Mammary epithelial cell (primary cell): ENCODE measurements at regions of chr9 and their contacts with region 1.

Region 1: DNA sequence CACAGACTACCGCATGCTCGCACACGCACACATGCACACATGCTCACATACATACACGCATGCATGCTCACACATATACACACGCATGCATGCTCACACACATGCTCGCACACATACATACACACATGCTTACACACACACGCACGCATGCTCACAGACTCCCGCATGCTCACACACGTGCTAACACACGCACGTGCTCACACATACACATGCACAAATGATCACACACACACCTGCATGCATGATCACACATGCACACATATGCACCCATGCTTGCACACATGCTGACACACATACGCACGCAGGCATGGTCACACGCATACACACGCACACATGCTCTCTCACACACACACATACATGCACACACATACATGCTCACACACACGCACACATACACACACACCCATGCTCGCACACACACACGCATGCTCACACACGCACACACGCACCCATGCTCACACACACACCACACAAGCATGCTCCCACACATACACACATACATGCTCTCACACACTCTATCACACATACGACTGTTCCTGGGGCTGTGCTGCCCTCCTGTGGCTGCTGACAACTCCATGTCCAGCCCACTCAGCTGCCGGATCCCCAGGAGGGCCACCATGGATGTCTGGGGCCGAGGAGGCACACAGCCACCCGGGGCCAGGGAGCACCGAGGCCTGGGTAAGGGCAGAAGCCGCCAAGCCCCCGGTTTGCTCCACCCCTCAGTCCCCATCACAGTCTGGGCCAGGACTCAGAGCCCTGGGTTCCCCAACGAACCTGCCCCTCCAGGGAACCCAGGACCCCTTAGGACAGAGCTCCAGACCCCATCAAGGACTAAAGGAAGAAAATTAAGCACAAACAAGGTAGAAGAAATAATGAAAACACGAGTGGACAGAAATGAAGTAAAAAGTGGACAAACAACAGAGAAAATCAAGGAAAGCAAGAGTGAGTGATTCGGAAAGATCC is 31.4 kb upstream of the EGFL7 start:
- DNase-seq: peak; percentile 50
- H3K4me3 ChIP-seq: no peak overlapping the region
- H3K27ac ChIP-seq: no peak overlapping the region
- H3K4me1 ChIP-seq: peaks cover 8% of the 10 kb centered on the region
- H3K27me3 ChIP-seq: no peaks in the 10 kb centered on the region
- CTCF ChIP-seq: peak; percentile 69 to 87

Region 2: GRCh38 chr9:136312436-136312835 is 318.9 kb before region 1 on chr9:
- CTCF ChIA-PET with region 1: no interaction called
- dilution Hi-C with region 1: no loop called
- in situ Hi-C with region 1: no loop called
- intact Hi-C with region 1: loop called (anchors 10 kb)
- DNase-seq: no peak
- H3K4me3 ChIP-seq: no peak overlapping the region
- H3K27ac ChIP-seq: no peak overlapping the region
- H3K4me1 ChIP-seq: peaks cover 15% of the 10 kb centered on the region
- H3K27me3 ChIP-seq: no peaks in the 10 kb centered on the region
- CTCF ChIP-seq: peak; percentile 46 to 88

Region 3: DNA sequence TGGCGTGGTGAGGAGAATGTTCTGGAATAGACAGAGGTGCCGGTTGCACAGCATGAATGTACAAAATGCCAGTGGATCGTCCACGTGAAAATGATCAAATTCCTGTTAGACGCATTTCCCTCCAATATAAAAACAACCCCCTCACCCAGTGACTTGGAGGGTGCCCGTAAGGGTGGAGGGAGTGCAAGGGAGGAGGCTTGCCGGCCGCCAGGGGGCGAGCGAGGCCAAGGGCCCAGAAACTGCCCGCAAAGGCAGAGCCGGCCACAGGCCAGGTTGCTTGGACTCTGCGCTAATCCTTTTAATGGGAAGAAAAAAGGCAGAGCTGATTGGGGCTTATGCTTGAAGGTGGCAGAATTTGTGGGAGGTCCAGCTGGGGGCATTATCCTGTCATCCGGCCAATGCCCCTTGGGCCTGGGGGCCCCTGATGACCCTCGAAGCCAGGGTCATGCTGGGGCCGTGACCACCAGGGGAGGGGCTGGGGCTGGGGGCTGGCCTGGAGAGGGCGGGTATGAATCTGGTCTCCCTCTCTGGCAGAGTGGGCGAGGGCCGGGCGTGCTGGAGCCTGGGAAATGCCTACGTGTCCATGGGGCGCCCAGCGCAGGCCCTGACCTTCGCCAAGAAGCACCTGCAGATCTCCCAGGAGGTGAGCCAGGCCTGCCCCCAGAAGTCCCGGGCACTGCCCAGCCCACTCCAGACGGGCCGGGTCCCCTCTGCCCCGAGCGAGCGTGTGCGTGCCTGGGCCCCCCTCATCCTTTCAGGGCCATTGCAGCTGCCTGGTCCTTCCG is 292.0 kb before region 1 on chr9:
- CTCF ChIA-PET with region 1: no interaction called
- dilution Hi-C with region 1: no loop called
- in situ Hi-C with region 1: loop called in 1 of 2 experiments (anchors 25 kb)
- intact Hi-C with region 1: no loop called
- DNase-seq: peak; percentile 38
- H3K4me3 ChIP-seq: no peak overlapping the region
- H3K27ac ChIP-seq: no peak overlapping the region
- H3K4me1 ChIP-seq: peaks cover 14% of the 10 kb centered on the region
- H3K27me3 ChIP-seq: no peaks in the 10 kb centered on the region
- CTCF ChIP-seq: peak; percentile 93

Region 4: GRCh38 chr9:136345281-136346156 is 285.8 kb before region 1 on chr9:
- CTCF ChIA-PET with region 1: no interaction called
- dilution Hi-C with region 1: no loop called
- in situ Hi-C with region 1: loop called in 1 of 2 experiments (anchors 25 kb)
- intact Hi-C with region 1: loop called (anchors 1 kb)
- DNase-seq: peak; percentile 76
- H3K4me3 ChIP-seq: peak overlapping the region; percentile 54 to 61 (median 58)
- H3K27ac ChIP-seq: peak overlapping the region; percentile 34
- H3K4me1 ChIP-seq: peaks cover 51% of the 10 kb centered on the region
- H3K27me3 ChIP-seq: no peaks in the 10 kb centered on the region
- CTCF ChIP-seq: peak in 1 of 2 donors; percentile 43

Region 5: DNA sequence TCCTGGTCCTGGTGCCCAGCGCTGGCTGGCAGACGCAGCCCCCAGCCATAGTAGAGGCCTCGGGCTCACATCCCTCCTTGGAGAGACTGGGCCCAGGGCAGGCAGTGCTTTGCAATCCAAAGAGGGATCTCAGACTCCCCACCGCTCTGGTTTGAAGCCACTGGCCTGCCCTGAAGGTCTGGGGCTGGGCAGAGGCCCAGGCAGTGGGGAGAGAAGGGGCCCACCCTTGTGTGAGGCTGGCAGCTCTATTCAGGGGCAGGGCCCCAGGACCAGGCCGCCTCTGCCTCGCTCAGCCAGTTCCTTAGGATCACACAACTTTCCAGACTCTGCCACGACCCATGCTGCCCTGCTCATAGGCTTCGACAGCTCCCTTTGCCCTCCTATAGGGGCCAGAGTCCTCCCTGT is 137.8 kb before region 1 on chr9:
- CTCF ChIA-PET with region 1: no interaction called
- dilution Hi-C with region 1: no loop called
- in situ Hi-C with region 1: loop called in 1 of 2 experiments (anchors 5 kb)
- intact Hi-C with region 1: no loop called
- DNase-seq: no peak
- H3K4me3 ChIP-seq: no peak overlapping the region
- H3K27ac ChIP-seq: no peak overlapping the region
- H3K4me1 ChIP-seq: no peaks in the 10 kb centered on the region
- H3K27me3 ChIP-seq: no peaks in the 10 kb centered on the region
- CTCF ChIP-seq: no peak

Region 6: DNA sequence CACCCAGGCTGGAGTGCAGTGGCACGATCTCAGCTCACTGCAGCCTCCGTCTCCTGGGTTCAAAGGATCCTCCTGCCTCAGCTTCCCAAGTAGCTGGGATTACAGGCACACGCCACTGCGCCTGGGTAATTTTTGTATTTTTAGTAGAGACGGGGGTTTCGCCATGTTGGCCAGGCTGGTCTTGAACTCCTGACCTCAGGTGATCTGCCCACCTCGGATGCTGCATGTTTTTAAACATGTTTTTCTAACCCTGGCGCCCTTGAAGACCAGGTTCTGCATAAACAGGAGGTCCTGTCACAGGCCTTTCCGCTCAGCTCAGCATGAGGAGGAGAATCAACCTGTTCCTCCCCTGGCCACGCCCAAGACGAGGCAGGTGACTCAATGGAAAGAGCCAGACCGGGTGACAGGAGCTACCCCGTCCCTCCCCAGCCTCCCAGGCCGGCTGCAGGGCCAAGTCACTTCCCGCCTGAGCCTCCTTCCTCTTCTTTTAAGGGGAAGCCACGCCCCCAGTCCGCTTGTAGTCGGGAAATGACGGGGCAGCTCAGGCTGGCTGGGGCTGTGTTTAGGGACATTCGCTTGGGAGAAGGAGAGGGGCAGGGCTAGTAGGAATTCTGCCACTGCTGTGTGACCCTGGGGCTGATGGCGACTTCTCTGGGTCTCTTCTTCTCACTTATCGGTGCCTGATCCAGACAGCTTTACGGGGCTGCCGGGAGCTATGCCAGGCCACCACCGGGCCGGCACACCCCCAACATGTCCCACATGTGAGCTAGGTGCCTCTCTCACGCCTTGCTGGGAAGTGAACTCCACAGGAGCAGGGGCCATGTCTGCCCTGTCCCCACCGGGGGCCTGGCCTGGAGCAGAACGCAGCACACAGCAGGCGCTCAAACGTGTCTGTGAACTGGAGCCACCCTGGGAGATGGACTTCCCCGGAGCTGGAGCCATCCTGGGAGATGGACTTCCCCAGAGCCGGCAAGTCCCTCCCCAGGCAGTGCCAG is 91.6 kb before region 1 on chr9:
- CTCF ChIA-PET with region 1: no interaction called
- dilution Hi-C with region 1: no loop called
- in situ Hi-C with region 1: loop called in 1 of 2 experiments (anchors 10 kb)
- intact Hi-C with region 1: no loop called
- DNase-seq: no peak
- H3K4me3 ChIP-seq: no peak overlapping the region
- H3K27ac ChIP-seq: no peak overlapping the region
- H3K4me1 ChIP-seq: peaks cover 46% of the 10 kb centered on the region
- H3K27me3 ChIP-seq: no peaks in the 10 kb centered on the region
- CTCF ChIP-seq: no peak

Region 7: DNA sequence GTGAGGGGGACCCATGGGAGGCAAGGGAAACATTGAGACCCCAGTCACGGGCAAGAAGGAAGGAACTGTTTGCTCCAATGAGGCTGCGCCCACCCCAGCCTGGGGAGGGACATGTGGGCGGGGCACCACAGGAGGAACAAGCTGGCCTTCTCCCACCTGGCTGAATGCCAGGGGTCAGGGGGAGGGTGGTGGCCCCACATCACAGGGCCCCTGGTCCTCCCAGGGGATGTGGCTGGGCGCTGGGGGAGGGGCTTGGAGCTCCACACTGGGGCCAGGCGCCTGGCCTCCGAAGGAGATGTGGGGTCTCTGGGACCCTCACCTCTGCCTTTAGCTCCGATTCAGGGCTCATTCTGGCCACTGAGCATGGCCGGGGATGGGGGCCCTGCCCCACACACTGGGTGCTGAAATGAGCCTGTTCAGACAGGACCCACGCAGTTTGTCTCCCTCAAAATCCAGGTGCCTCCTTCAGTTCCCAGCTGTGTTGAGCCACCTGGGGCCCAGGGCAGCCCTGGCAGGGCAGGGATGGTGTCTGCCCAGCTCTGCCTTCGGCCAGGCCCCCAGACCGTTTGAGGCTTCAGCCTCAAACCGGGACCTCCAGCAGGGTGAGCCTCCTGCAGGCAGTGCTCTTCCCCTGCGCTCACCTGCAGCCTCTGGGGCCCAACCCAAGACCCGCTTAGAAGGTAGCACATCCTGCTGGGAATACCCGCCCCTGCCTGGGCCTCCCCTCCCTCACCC is 52.2 kb before region 1 on chr9:
- CTCF ChIA-PET with region 1: no interaction called
- dilution Hi-C with region 1: no loop called
- in situ Hi-C with region 1: no loop called
- intact Hi-C with region 1: no loop called
- DNase-seq: peak; percentile 36
- H3K4me3 ChIP-seq: no peak overlapping the region
- H3K27ac ChIP-seq: no peak overlapping the region
- H3K4me1 ChIP-seq: peaks cover 12% of the 10 kb centered on the region
- H3K27me3 ChIP-seq: no peaks in the 10 kb centered on the region
- CTCF ChIP-seq: peak in 1 of 2 donors; percentile 8

Region 8: GRCh38 chr9:136694236-136694942 is 63.1 kb after region 1 on chr9:
- CTCF ChIA-PET with region 1: no interaction called
- dilution Hi-C with region 1: no loop called
- in situ Hi-C with region 1: no loop called
- intact Hi-C with region 1: loop called (anchors 2 kb)
- DNase-seq: peak; percentile 37
- H3K4me3 ChIP-seq: peak overlapping the region in 1 of 3 experiments; percentile 0
- H3K27ac ChIP-seq: peak overlapping the region; percentile 9
- H3K4me1 ChIP-seq: peaks cover 41% of the 10 kb centered on the region
- H3K27me3 ChIP-seq: no peaks in the 10 kb centered on the region
- CTCF ChIP-seq: peak; percentile 49 to 86